ENCODE measurements at regions of chr17 and their contacts with region 1.

Region 1: GRCh38 chr17:67488161-67488560 is 111.1 kb downstream of the PITPNC1 start:
- DNase-seq: no peak
- H3K4me3 ChIP-seq: no peak overlapping the region
- H3K27ac ChIP-seq: no peak overlapping the region
- H3K4me1 ChIP-seq: no peaks in the 10 kb centered on the region
- H3K27me3 ChIP-seq: no peaks in the 10 kb centered on the region
- CTCF ChIP-seq: no peak

Region 2: DNA sequence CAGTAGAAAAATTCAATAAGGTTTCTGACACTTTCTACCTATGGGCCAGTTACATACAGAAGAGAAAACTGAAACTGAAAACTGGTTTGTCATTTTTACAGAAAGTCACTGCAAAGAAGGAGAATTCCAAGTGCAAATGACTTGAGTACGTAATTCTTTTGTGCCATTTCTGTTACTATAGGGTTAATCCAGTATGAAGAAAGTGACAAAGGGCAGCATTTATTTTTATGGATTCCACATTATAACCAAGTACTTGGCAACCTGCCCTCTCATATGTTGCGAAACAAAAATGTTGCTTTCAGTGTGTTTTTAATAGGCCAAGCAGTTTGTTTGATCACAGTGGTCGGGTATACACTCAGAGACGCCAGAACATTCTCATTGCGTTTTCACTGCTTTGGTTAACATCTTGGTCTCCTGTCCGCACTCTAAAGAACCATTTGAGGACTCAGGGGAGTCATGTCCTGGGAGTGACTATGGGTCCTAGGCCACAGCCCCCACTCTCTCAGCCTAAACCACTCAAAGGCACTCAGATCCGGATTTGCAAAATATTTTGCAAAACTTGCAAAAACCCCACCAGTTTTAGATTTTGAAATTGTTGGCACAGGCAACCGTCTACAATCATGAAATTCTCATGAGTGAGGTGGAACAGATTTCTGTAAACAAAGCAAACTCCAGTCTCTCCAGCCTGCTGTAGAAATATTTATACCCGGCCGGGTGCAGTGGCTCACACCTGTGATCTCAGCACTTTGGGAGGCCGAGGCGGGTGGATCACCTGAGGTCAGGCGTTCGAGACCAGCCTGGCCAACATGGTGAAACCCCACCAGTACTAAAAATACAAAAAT is 227.8 kb before region 1 on chr17:
- CTCF ChIA-PET with region 1: no interaction called
- dilution Hi-C with region 1: no loop called
- in situ Hi-C with region 1: no loop called
- intact Hi-C with region 1: no loop called
- DNase-seq: peak; percentile 50
- H3K4me3 ChIP-seq: no peak overlapping the region
- H3K27ac ChIP-seq: no peak overlapping the region
- H3K4me1 ChIP-seq: peaks cover 11% of the 10 kb centered on the region
- H3K27me3 ChIP-seq: no peaks in the 10 kb centered on the region
- CTCF ChIP-seq: no peak

Region 3: GRCh38 chr17:67326441-67326840 is 161.7 kb before region 1 on chr17:
- CTCF ChIA-PET with region 1: no interaction called
- dilution Hi-C with region 1: no loop called
- in situ Hi-C with region 1: no loop called
- intact Hi-C with region 1: no loop called
- DNase-seq: no peak
- H3K4me3 ChIP-seq: no peak overlapping the region
- H3K27ac ChIP-seq: no peak overlapping the region
- H3K4me1 ChIP-seq: no peaks in the 10 kb centered on the region
- H3K27me3 ChIP-seq: no peaks in the 10 kb centered on the region
- CTCF ChIP-seq: no peak

Region 4: DNA sequence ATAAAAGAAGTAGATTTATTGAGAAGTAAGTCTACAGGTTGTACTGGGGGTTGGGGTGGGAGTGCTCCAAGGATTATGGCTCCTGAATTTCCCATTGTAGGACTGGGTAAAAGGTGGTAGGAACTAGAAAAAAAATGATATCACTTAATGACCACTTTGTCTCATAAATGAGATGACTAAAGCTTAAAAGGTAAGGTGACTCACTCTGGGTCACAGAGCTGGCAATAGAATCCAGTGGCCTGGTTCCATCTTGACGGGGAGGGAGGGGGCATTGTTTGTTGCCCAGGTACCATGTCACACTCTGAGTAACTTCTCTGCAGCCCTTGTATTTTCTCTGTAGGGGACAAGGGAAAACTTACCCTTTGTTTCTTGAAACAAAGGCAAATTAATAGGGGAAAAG is 15.0 kb after region 1 on chr17:
- CTCF ChIA-PET with region 1: interaction called, 16 read pairs
- dilution Hi-C with region 1: no loop called
- in situ Hi-C with region 1: no loop called
- intact Hi-C with region 1: no loop called
- DNase-seq: peak; percentile 80
- H3K4me3 ChIP-seq: no peak overlapping the region
- H3K27ac ChIP-seq: no peak overlapping the region
- H3K4me1 ChIP-seq: peaks cover 13% of the 10 kb centered on the region
- H3K27me3 ChIP-seq: no peaks in the 10 kb centered on the region
- CTCF ChIP-seq: no peak

Region 5: GRCh38 chr17:67531291-67531690 is 43.1 kb after region 1 on chr17:
- CTCF ChIA-PET with region 1: no interaction called
- dilution Hi-C with region 1: loop called (anchors 5 kb)
- in situ Hi-C with region 1: no loop called
- intact Hi-C with region 1: no loop called
- DNase-seq: no peak
- H3K4me3 ChIP-seq: no peak overlapping the region
- H3K27ac ChIP-seq: no peak overlapping the region
- H3K4me1 ChIP-seq: no peaks in the 10 kb centered on the region
- H3K27me3 ChIP-seq: no peaks in the 10 kb centered on the region
- CTCF ChIP-seq: no peak

Region 6: DNA sequence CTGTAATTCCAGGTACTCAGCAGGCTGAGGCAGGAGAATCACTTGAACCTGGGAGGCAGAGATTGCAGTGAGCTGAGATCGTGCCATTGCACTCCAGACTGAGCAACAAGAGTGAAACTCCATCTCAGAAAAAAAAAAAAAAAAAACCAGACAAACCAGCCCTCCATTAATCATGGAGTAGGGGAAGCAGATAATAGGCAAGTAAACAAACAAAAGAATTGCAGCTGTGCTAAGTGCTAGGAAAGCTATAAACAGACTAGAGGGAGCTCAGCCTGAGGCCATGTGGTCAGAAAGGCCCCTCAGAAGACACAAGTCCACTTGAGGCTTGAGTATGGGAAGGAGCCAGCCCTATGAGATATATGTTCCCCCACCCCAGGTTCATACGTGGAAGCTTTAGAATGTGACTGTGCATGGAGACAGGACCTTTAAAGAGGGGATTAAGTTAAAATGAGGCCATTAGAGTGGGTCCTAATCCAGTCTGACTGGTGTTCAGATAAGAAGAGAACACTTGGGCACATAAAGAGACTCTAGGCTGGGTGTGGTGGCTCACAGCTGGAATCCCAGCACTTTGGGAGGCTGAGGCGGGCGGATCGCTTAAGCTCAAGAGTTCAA is 96.9 kb after region 1 on chr17:
- CTCF ChIA-PET with region 1: no interaction called
- dilution Hi-C with region 1: loop called (anchors 5 kb)
- in situ Hi-C with region 1: no loop called
- intact Hi-C with region 1: no loop called
- DNase-seq: peak; percentile 4
- H3K4me3 ChIP-seq: no peak overlapping the region
- H3K27ac ChIP-seq: no peak overlapping the region
- H3K4me1 ChIP-seq: no peaks in the 10 kb centered on the region
- H3K27me3 ChIP-seq: no peaks in the 10 kb centered on the region
- CTCF ChIP-seq: no peak